ENCODE measurements at regions of chr17 and their contacts with region 1.

Region 1: GRCh38 chr17:73429440-73430164 is 117.8 kb upstream of the CDC42EP4 start:
- DNase-seq: peak; percentile 78 to 84
- H3K4me3 ChIP-seq: no peak overlapping the region
- H3K27ac ChIP-seq: no peak overlapping the region
- H3K4me1 ChIP-seq: peaks cover 0 to 3% of the 10 kb centered on the region in 2 donors
- H3K27me3 ChIP-seq: no peaks in the 10 kb centered on the region
- CTCF ChIP-seq: peak; percentile 86 to 96 (median 92)
- POLR2A ChIP-seq: no peak

Region 2: GRCh38 chr17:74170924-74171323 is 741.3 kb after region 1 on chr17:
- intact Hi-C with region 1: loop called (anchors 2 kb)
- DNase-seq: no peak
- H3K4me3 ChIP-seq: no peak overlapping the region
- H3K27ac ChIP-seq: no peak overlapping the region
- H3K4me1 ChIP-seq: no peaks in the 10 kb centered on the region
- H3K27me3 ChIP-seq: no peaks in the 10 kb centered on the region
- CTCF ChIP-seq: no peak
- POLR2A ChIP-seq: no peak